ENCODE measurements at regions of chr4 and their contacts with region 1.

Region 1: GRCh38 chr4:145180298-145181090 is at the start of gene OTUD4:
- DNase-seq: peak; percentile 94 to 96
- ATAC-seq: peak; percentile 71 to 76
- H3K4me3 ChIP-seq: peak within 1 kb of the TSS; percentile 63 to 95 (median 87)
- H3K27ac ChIP-seq: peak within 1 kb of the TSS; percentile 97 to 99 (median 98)
- H3K4me1 ChIP-seq: peaks cover 26 to 43% of the 10 kb centered on the region in 2 donors
- H3K27me3 ChIP-seq: no peaks in the 10 kb centered on the region
- CTCF ChIP-seq: peak in 3 of 5 experiments; percentile 15 to 23 (median 18)
- POLR2A ChIP-seq: peak; percentile 86 to 87
- total RNA-seq, gene OTUD4: 32.6 to 61.1 (median 47.9) TPM

Region 2: DNA sequence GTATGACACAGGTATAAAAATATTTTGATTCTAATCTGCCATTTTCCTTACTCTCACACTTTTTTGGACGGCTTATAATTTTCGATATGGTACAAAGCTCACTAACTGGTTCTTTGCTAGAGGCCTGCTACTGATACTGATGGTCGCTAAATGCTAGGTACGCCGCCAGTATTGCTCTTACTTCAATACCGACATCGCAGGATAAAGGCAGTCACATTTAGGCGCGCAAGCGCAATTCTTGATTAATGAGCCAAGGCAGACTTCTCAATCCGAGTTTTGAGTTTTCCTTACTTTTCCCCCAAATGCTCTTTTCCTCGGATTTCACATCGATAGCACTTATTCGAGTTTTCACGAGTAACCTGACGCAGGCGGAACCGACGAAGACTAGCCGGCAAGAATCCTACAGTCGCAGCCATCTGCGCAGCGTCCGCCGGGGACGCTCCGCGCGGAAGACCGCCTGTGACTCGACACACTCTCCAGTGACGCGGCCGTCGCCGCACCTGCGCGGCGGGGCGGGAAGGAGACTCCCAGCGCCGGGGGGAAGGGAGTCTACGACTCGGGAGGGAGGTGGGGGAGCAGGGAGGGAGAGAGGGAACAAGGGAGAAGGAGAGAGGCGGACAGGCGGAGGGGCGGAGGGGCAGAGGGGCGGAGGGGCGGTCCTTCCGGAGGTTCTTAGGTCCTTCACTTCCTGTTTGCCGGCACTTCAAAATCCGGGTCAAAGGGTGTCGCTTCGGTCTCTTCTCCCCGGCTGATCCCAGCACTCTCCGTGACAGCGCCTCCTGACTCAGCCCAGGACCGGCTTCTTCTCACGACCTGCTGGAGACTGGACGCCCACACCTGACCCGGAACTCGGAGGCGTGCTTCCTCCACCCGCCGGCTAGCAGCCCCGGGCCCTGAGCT is 1996.0 kb before region 1 on chr4 and contains the start of gene USP38:
- in situ Hi-C with region 1: no loop called
- intact Hi-C with region 1: loop called (anchors 10 kb)
- DNase-seq: peak; percentile 94 to 96
- ATAC-seq: peak; percentile 81 to 93
- H3K4me3 ChIP-seq: peak within 1 kb of the TSS; percentile 73 to 94 (median 91)
- H3K27ac ChIP-seq: peak within 1 kb of the TSS; percentile 95 to 98 (median 96)
- H3K4me1 ChIP-seq: peaks cover 29 to 37% of the 10 kb centered on the region in 2 donors
- H3K27me3 ChIP-seq: no peaks in the 10 kb centered on the region
- CTCF ChIP-seq: peak in 2 of 5 experiments; percentile 9 to 28
- POLR2A ChIP-seq: peak; percentile 82 to 91
- total RNA-seq, gene USP38: 63.6 to 142 (median 102) TPM

Region 3: GRCh38 chr4:145154573-145154972 is 25.9 kb before region 1 on chr4:
- in situ Hi-C with region 1: no loop called
- intact Hi-C with region 1: loop called (anchors 2 kb)
- DNase-seq: no peak
- ATAC-seq: peak; percentile 66 to 82
- H3K4me3 ChIP-seq: no peak overlapping the region
- H3K27ac ChIP-seq: peak overlapping the region; percentile 65 to 73 (median 68)
- H3K4me1 ChIP-seq: peaks cover 13 to 22% of the 10 kb centered on the region in 2 donors
- H3K27me3 ChIP-seq: no peaks in the 10 kb centered on the region
- CTCF ChIP-seq: peak; percentile 25 to 70 (median 36)
- POLR2A ChIP-seq: no peak

Region 4: DNA sequence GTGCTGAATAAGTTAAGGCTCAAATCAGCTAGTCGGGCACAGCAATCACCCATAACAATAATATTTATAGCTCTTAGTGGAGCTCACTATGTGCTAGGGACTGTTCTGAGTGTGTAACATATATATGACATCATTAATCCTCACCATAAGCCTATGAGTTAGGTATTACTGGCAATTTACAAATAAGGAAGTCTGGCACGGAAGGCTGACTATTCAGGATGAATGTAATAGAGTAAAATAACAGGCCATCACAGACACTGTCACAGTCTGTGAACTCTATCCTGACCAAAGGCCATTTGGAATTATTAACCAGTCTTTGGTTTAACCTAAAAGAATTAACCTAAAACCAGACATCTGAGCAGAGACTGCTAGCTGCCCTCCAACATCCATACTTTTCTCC is 618.7 kb after region 1 on chr4:
- in situ Hi-C with region 1: no loop called
- intact Hi-C with region 1: loop called (anchors 10 kb)
- DNase-seq: no peak
- ATAC-seq: no peak
- H3K4me3 ChIP-seq: no peak overlapping the region
- H3K27ac ChIP-seq: peak overlapping the region; percentile 82 to 90 (median 86)
- H3K4me1 ChIP-seq: peaks cover 45 to 48% of the 10 kb centered on the region in 2 donors
- H3K27me3 ChIP-seq: no peaks in the 10 kb centered on the region
- CTCF ChIP-seq: no peak
- POLR2A ChIP-seq: no peak

Region 5: GRCh38 chr4:145936142-145936996 is 755.9 kb after region 1 on chr4:
- in situ Hi-C with region 1: no loop called
- intact Hi-C with region 1: loop called (anchors 2 kb)
- DNase-seq: peak; percentile 56 to 79
- ATAC-seq: peak; percentile 67 to 73
- H3K4me3 ChIP-seq: peak overlapping the region; percentile 71 to 90 (median 84)
- H3K27ac ChIP-seq: peak overlapping the region; percentile 91 to 99 (median 94)
- H3K4me1 ChIP-seq: peaks cover 25 to 34% of the 10 kb centered on the region in 2 donors
- H3K27me3 ChIP-seq: no peaks in the 10 kb centered on the region
- CTCF ChIP-seq: peak in 4 of 5 experiments; percentile 23 to 41 (median 34)
- POLR2A ChIP-seq: peak in 1 of 2 donors; percentile 53

Region 6: GRCh38 chr4:146545102-146545501 is 1364.6 kb after region 1 on chr4:
- in situ Hi-C with region 1: no loop called
- intact Hi-C with region 1: no loop called
- DNase-seq: no peak
- ATAC-seq: no peak
- H3K4me3 ChIP-seq: no peak overlapping the region
- H3K27ac ChIP-seq: no peak overlapping the region
- H3K4me1 ChIP-seq: no peaks in the 10 kb centered on the region
- H3K27me3 ChIP-seq: no peaks in the 10 kb centered on the region
- CTCF ChIP-seq: no peak
- POLR2A ChIP-seq: no peak